ENCODE measurements at regions of chr19 and their contacts with region 1.

Region 1: GRCh38 chr19:17605761-17606745 is 50.6 kb downstream of the COLGALT1 start:
- DNase-seq: peak; percentile 29
- H3K4me3 ChIP-seq: peak overlapping the region; percentile 43
- H3K27me3 ChIP-seq: peaks cover 8% of the 10 kb centered on the region
- CTCF ChIP-seq: no peak

Region 2: DNA sequence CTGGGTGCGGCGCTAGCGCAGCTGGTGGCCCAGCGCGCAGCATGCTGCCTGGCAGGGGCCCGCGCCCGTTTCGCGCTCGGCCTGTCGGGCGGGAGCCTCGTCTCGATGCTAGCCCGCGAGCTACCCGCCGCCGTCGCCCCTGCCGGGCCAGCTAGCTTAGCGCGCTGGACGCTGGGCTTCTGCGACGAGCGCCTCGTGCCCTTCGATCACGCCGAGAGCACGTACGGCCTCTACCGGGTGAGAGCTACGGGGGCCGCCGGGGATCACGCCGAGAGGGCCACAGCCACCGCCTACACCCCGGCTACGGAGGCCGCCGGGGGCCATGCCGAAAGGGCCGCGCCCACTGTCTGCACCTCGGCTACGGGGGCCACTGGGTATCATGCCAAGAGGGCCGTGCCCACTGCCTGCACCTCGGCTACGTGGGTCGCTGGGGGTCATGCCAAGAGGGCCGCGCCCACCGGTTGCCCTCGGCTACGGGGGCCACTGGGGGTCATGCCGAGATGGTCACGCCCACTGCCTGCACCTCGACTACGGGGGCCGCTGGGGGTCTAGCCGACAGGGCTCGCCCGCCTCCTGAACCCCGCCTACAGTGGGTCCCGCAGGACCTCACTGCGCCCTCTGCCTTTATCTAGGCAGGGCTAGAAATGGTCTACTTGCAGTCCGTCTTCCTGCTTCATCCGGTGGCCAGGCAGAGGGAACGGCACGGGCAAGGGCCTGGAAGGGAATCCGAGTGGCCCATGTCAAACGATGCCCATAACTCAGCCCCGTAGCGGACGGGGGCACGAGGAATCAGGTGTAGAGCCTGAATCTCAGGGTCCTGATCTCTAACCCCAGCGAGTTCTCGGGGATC is 94.1 kb before region 1 on chr19:
- CTCF ChIA-PET with region 1: no interaction called
- POLR2A ChIA-PET with region 1: interaction called, 11 read pairs
- DNase-seq: no peak
- H3K4me3 ChIP-seq: peak overlapping the region; percentile 96
- H3K27me3 ChIP-seq: no peaks in the 10 kb centered on the region
- CTCF ChIP-seq: peak; percentile 47

Region 3: DNA sequence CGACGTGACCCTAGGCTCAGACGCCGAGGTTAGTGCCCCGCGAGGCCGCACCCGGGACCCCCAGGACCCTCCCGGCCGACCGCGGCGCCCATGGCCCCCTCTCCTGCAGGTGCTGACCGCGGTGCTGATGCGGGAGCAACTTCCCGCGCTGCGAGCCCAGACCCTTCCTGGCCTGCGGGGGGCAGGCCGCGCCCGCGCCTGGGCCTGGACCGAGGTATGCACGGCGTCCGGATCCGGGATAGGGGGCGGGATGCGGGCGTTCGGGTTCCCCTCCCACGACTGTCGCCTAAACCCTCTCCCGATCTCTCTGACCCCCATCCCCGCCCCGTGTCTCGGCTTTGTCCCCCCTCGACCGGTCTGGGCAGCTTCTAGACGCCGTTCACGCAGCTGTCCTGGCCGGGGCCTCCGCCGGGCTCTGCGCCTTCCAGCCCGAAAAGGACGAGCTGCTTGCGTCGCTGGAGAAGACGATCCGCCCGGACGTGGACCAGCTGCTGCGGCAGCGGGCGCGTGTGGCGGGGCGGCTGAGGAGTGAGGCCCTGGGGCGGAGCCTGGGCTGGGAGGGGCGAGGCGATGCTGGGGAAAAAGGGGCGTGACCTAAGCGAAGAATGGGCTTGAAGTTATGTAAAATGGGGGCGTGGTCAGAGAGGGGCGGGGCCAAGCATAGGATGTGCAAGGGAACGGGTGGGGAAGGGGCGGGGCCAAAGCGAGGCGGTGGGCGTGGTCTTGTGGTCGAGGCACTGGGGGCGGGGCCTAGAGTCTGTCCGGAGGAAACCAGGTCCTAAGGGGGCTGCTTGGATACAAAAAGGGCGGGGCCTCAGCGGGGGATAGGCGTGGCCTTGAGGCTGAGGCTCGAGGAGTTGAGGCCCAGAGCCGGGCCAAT is 66.6 kb before region 1 on chr19:
- CTCF ChIA-PET with region 1: no interaction called
- POLR2A ChIA-PET with region 1: no interaction called
- DNase-seq: peak; percentile 69
- H3K4me3 ChIP-seq: peak overlapping the region; percentile 47
- H3K27me3 ChIP-seq: no peaks in the 10 kb centered on the region
- CTCF ChIP-seq: peak; percentile 50